Heart left ventricle (tissue), 16 donors: ENCODE measurements at regions of chr11 and their contacts with region 1.

Region 1: DNA sequence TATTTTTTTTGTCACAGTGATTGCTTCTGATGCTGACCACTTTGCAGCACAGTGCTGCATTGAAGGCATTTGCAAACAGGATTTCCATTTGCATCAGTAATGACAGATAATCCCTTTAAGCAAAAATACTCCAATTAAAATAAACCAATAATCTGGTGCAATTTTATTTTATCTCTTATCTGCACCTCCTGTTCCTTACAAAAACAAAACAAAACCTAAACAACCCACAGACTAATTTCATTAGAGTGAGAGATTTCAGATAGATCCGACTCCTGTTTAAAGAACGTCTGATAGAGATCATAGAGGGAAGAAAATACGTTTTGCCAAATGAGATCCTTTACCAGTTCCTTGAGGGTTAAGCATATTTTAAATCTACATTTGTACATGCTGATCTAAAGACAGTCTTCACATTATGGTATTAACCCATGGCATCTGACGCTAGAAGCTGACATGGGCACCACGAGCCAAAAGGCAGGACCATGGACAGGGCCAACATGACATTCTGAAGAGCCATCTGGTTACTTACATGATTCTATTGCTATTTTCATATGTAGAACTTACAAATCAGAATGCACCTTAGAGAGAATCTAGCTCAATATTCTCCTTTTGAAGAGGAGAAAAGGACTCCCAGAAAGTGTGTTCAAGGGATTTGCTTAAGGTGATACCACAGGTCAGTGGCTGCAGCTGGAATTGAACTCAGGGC is 286.2 kb upstream of the NARS2 start:
- DNase-seq: peak in 1 of 5 donors; percentile 32
- ATAC-seq: no peak
- H3K4me3 ChIP-seq: no peak overlapping the region
- H3K27ac ChIP-seq: no peak overlapping the region
- H3K4me1 ChIP-seq: no peaks in the 10 kb centered on the region
- H3K27me3 ChIP-seq: peaks cover 0 to 3% (median 0%) of the 10 kb centered on the region in 9 donors
- CTCF ChIP-seq: no peak
- POLR2A ChIP-seq: no peak

Region 2: GRCh38 chr11:78812513-78813293 is 48.2 kb before region 1 on chr11:
- intact Hi-C with region 1: loop called in 1 of 10 experiments (anchors 5 kb)
- DNase-seq: no peak
- ATAC-seq: peak in 1 of 4 donors; percentile 33
- H3K4me3 ChIP-seq: no peak overlapping the region
- H3K27ac ChIP-seq: peak overlapping the region in 1 of 12 donors; percentile 33
- H3K4me1 ChIP-seq: peaks cover 0 to 59% (median 7%) of the 10 kb centered on the region in 12 donors
- H3K27me3 ChIP-seq: no peaks in the 10 kb centered on the region
- CTCF ChIP-seq: no peak
- POLR2A ChIP-seq: no peak

Region 3: GRCh38 chr11:78886616-78887015 is 25.7 kb after region 1 on chr11:
- intact Hi-C with region 1: no loop called
- DNase-seq: no peak
- ATAC-seq: peak in 3 of 4 donors; percentile 59 to 78 (median 77)
- H3K4me3 ChIP-seq: no peak overlapping the region
- H3K27ac ChIP-seq: no peak overlapping the region
- H3K4me1 ChIP-seq: peaks cover 0 to 10% (median 0%) of the 10 kb centered on the region in 12 donors
- H3K27me3 ChIP-seq: no peaks in the 10 kb centered on the region
- CTCF ChIP-seq: no peak
- POLR2A ChIP-seq: no peak